ENCODE measurements at regions of chr4 and their contacts with region 1.

Region 1: GRCh38 chr4:163107754-163108153 is 58.9 kb downstream of the NAF1 start:
- DNase-seq: no peak
- H3K4me3 ChIP-seq: no peak overlapping the region
- H3K27ac ChIP-seq: no peak overlapping the region
- H3K27me3 ChIP-seq: no peaks in the 10 kb centered on the region
- CTCF ChIP-seq: peak; percentile 50

Region 2: GRCh38 chr4:163121689-163122088 is 13.9 kb after region 1 on chr4:
- CTCF ChIA-PET with region 1: interaction called, 10 read pairs
- POLR2A ChIA-PET with region 1: no interaction called
- DNase-seq: no peak
- H3K4me3 ChIP-seq: no peak overlapping the region
- H3K27ac ChIP-seq: no peak overlapping the region
- H3K27me3 ChIP-seq: no peaks in the 10 kb centered on the region
- CTCF ChIP-seq: no peak

Region 3: GRCh38 chr4:163191999-163192398 is 84.2 kb after region 1 on chr4:
- CTCF ChIA-PET with region 1: interaction called, 38 read pairs
- POLR2A ChIA-PET with region 1: no interaction called
- DNase-seq: no peak
- H3K4me3 ChIP-seq: no peak overlapping the region
- H3K27ac ChIP-seq: no peak overlapping the region
- H3K27me3 ChIP-seq: no peaks in the 10 kb centered on the region
- CTCF ChIP-seq: peak; percentile 46

Region 4: GRCh38 chr4:163332500-163333406 is 225.0 kb after region 1 on chr4 and contains the start of gene NPY1R:
- CTCF ChIA-PET with region 1: interaction called, 160 read pairs
- POLR2A ChIA-PET with region 1: no interaction called
- DNase-seq: peak; percentile 36
- H3K4me3 ChIP-seq: peak within 1 kb of the TSS; percentile 65
- H3K27ac ChIP-seq: no peak within 1 kb of the TSS
- H3K27me3 ChIP-seq: peaks cover 22% of the 10 kb centered on the region
- CTCF ChIP-seq: peak; percentile 79
- polyA plus RNA-seq, gene NPY1R: not detected in 2 replicates